KBM-7 (cell line): ENCODE measurements at regions of chr21 and their contacts with region 1.

Region 1: GRCh38 chr21:31866077-31866511 is 6.7 kb upstream of the HUNK start:
- DNase-seq: peak; percentile 82

Region 2: GRCh38 chr21:31772674-31773555 is 93.2 kb before region 1 on chr21:
- in situ Hi-C with region 1: no loop called
- DNase-seq: no peak

Region 3: DNA sequence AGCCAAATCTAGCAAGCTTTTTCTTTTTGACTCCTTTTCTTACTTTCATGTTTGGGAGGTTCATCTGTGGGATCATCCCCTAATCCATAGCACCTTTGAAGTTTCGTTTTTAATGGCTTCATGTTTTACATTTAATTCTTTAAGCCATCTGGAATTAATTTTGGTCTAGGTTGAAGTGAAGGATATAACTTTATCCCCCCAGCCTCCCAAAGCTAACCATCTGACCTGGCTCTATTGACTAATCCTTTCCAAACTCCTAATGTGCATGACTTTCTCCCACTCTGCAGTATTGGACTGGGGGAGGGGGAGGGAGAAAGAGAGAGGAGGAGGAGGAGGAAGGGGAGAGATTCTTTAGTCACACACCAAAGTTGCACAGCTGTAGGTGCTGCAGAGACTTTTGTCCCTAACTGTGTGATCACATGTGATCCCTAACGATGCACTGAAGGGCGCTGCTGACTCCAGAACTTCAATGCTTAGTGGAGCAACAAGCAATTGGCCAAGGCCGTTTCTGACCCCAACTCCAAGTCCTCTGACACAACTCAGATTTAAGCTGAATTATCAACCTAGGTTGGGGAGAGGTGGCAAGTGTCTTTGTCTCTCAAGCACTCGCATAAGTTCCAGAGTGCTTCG is 198.3 kb after region 1 on chr21:
- in situ Hi-C with region 1: no loop called
- DNase-seq: no peak

Region 4: DNA sequence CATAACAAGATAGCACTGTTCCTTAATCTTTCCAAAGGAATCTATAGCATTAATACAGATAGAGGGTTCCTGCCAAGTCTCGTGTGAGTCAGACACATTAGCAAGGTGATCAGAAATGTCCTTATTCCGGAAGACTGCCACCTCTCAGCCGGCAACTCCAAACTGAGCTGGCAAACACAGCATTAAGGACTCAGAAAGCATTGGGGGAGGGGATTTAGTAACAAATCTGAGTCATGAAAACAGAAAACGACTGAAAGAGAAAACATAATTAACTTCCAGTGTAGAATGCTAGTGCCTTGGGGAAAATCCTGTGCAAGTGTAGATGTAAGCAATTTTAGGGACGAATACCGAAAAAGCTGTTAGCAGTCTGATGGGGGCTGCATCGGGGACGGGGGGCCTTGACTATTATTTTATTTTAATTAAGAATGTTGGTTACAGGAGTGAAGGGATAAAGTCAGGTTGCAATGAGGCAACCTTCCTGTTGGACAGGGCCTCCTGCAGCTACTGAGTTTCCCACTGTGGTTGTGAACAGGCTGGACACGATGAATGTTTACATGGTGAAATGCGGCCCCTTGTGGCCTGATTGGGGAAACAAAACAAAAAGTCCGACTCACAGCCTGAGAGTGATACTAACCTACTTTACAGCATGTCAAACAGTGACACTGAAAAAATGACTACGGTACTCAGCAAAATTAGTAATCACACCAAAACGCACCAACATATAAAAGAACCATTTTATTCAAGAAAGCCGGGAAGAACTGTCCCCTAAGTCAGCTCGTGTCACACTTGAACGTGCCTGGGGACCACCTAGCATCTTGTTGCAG is 392.1 kb after region 1 on chr21:
- in situ Hi-C with region 1: loop called (anchors 25 kb)
- DNase-seq: peak; percentile 75